ENCODE measurements at regions of chr10 and their contacts with region 1.

Region 1: DNA sequence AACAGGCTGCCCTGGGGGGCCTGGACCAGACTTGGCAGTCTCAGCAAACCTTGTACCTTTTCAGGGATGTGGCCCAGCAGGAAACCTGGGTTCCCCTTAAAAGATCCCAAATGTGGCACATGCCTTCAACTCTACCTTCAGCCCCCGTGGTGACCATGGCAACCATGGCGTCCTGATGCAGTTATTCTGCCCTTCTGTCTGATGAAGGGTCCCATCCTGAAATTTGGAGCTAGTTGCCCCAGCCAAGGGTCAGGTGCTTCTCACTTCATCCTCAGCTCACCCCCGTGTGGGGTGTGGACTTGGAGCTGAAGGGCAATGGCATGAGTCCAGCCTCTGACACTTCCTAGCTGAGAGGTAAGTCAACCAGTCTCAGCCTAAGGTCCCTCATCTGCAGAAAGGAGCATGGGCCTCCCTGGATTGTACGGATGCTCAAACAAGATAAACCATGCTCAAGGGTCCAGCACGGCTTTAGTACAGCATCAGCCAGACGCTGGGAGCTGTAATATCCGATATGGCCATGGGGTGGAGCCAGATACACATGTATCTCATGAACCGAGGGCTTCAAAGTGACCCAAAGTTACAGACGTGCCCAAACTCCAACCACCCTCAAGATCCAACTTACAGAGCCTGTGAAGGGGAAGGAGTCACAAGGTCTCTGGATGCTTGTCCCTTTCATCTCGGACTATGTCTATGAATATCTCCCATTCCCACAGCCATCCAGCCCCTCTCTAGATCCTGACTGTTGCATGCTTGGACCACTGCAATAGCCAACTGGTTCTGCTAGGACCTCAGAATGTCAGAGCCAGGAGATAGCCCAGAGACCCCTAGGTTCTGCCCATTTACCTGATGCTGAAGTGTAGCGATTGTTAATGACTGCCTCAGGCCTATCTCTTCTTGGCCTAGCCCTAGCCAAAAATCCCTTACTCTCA is 142.5 kb downstream of the SH3PXD2A start:
- DNase-seq: peak; percentile 79 to 87 (median 87)
- H3K4me3 ChIP-seq: no peak overlapping the region
- H3K27ac ChIP-seq: no peak overlapping the region
- H3K4me1 ChIP-seq: peaks cover 0 to 6% (median 0%) of the 10 kb centered on the region in 3 donors
- H3K27me3 ChIP-seq: no peaks in the 10 kb centered on the region
- CTCF ChIP-seq: peak; percentile 97

Region 2: DNA sequence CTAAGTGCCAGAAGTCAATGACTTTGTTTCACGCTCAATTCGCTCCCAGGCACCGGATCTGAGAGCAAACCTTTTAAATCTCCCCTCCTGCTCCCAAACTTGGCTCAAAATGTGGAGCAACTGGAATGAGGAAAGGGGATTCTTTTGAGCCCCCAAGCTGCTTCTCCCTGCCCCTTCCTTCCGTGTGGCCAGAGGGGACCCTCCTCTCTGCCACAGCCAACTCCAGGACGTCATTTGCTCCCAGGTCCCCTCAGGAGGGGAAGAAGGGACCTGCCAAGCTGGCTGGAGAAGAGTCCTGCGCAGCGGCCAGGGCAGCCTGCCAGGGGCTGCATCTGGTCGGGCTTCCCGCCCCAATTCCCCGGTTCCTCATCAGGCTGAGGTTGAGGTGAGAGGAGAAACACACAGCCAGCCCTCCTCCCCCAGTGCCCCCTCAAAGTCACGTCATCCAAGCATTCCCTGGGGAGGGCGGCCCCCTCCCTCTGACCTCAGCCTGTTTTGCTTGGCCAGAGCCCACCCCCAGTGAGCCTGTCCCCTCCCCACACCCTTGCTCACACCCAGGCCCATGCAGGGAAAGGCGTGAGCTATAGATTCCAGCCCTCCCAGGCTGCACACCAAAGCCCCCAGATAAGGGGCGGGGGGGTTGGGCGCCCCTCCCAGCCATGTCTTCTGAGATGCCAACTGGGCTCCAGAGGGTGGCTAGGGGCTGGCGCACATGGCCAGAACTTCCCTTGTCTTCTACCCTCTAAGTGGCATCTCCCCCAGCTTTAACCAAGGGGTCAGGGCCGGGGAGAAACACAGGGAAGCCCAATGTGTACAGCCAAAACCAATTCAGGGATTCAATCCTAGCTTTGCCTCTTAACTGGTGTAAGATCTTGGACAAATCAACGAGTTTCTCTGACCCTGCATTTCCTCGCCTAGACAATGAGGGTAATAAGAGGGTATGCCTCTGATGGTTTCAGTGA is 107.5 kb after region 1 on chr10:
- intact Hi-C with region 1: no loop called
- DNase-seq: peak; percentile 30 to 77 (median 63)
- H3K4me3 ChIP-seq: no peak overlapping the region
- H3K27ac ChIP-seq: no peak overlapping the region
- H3K4me1 ChIP-seq: peaks cover 0 to 8% (median 0%) of the 10 kb centered on the region in 3 donors
- H3K27me3 ChIP-seq: no peaks in the 10 kb centered on the region
- CTCF ChIP-seq: no peak

Region 3: GRCh38 chr10:103859161-103860086 is 146.6 kb after region 1 on chr10:
- intact Hi-C with region 1: loop called (anchors 5 kb)
- DNase-seq: peak in 4 of 5 donors; percentile 85 to 91 (median 88)
- H3K4me3 ChIP-seq: no peak overlapping the region
- H3K27ac ChIP-seq: no peak overlapping the region
- H3K4me1 ChIP-seq: peaks cover 0 to 10% (median 0%) of the 10 kb centered on the region in 3 donors
- H3K27me3 ChIP-seq: no peaks in the 10 kb centered on the region
- CTCF ChIP-seq: peak; percentile 70